ENCODE measurements at regions of chr6 and their contacts with region 1.

Region 1: DNA sequence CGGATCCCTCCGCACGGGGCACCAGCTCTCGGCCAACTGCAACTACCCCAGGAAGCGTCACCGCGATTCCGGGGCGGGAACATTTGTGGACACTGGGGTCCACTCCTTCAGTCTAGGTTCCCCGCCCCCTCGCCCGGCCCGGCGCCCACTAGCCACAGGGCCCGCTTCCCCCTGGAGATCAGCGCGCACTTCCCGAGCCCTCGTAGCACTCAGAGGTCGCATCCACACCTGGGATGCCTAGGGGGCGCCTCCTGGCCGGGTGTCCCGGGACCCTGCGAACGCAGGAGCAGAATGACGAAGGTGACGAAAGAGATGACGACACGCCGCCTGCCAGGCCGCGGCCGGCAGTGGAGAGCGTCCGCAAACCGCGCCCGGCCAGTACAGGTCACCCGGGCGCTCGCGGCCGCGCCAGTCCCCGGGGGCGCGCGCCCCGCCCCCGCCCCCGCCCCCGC is 309 bp upstream of the AIG1 start:
- DNase-seq: peak; percentile 94
- H3K4me3 Mint-ChIP-seq: peak overlapping the region; percentile 91
- H3K27ac Mint-ChIP-seq: peak overlapping the region; percentile 92
- H3K4me1 Mint-ChIP-seq: peaks cover 23% of the 10 kb centered on the region
- H3K27me3 Mint-ChIP-seq: no peaks in the 10 kb centered on the region

Region 2: DNA sequence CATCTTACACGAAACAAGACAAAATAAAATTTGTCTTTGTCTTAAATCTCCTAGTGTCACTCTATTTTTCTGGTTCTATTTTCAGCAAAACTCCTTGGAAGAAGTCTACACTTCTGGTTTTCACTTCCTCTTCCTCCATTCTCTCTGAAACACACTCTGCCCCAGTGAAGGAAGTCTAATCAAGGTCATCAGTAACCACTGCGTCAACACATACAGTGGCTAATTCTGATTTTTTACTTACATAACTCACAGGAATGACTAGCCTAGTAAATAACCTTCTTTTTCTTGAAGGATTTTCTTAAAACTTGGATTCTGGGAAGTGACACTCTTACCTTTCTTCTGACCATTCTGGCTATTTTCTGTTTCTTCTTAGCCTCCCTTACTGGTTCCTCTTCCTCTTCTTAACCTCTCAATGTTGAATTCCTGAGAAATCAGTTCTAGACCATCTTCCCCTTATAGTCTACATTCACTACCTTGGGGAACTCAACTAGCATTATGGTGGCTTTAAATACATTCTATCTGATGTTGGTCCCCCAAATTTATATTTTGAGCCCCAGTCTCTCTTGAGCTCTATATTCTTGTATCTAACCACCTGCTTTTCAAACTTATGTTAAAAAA is 37.8 kb after region 1 on chr6:
- intact Hi-C with region 1: no loop called
- DNase-seq: peak; percentile 34
- H3K4me3 Mint-ChIP-seq: no peak overlapping the region
- H3K27ac Mint-ChIP-seq: no peak overlapping the region
- H3K4me1 Mint-ChIP-seq: peaks cover 4% of the 10 kb centered on the region
- H3K27me3 Mint-ChIP-seq: no peaks in the 10 kb centered on the region

Region 3: GRCh38 chr6:143136647-143137046 is 76.3 kb after region 1 on chr6:
- intact Hi-C with region 1: loop called (anchors 1 kb)
- DNase-seq: no peak
- H3K4me3 Mint-ChIP-seq: no peak overlapping the region
- H3K27ac Mint-ChIP-seq: peak overlapping the region; percentile 76
- H3K4me1 Mint-ChIP-seq: peaks cover 21% of the 10 kb centered on the region
- H3K27me3 Mint-ChIP-seq: no peaks in the 10 kb centered on the region

Region 4: GRCh38 chr6:143176090-143177021 is 116.0 kb after region 1 on chr6:
- intact Hi-C with region 1: no loop called
- DNase-seq: no peak
- H3K4me3 Mint-ChIP-seq: no peak overlapping the region
- H3K27ac Mint-ChIP-seq: no peak overlapping the region
- H3K4me1 Mint-ChIP-seq: no peaks in the 10 kb centered on the region
- H3K27me3 Mint-ChIP-seq: no peaks in the 10 kb centered on the region

Region 5: DNA sequence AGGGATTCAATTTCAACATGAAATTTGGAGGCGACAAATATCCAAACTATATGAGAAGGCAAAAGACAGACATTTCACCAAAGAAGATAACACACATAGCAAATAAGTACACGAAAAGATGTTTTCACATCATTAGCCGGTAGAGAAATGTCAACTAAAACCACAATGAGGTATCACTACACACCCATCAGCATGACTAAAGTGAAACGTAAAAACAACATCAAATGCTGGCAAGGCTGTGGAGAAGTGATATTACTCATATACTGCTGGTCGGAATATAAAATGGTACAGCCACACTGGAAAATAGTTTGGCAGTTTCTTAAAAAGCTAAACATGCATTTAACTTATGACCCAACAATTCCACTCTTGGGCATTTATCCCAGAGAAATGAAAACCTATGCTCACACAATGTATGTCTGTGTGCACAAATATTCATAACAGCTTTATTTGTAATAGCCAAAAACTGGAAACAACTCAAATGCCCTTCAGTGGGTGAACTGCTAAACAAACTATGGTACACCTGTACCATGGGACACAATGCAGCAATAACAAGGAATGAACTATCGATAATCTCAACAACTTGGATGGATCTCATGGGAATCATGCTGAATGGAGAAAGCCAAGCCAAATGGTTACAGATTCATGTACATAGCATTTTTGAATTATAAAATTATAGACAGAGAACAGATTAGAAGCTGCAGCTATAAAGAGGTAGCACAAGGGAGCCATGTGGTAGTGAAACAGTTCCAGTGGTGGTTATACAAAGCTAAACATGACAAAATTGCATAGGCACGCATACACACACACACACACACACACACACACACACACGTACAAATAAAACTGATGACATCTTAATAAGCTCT is 381.5 kb after region 1 on chr6:
- intact Hi-C with region 1: loop called (anchors 2 kb)
- DNase-seq: peak; percentile 77
- H3K4me3 Mint-ChIP-seq: peak overlapping the region; percentile 47
- H3K27ac Mint-ChIP-seq: peak overlapping the region; percentile 95
- H3K4me1 Mint-ChIP-seq: peaks cover 49% of the 10 kb centered on the region
- H3K27me3 Mint-ChIP-seq: no peaks in the 10 kb centered on the region